ENCODE measurements at regions of chr5 and their contacts with region 1.

Region 1: GRCh38 chr5:56200856-56201666 is 32.1 kb downstream of the ANKRD55 start:
- DNase-seq: peak in 1 of 2 donors; percentile 62
- ATAC-seq: peak; percentile 94 to 100 (median 98)
- H3K4me3 ChIP-seq: no peak overlapping the region
- H3K27ac ChIP-seq: no peak overlapping the region
- H3K4me1 ChIP-seq: peaks cover 0 to 12% (median 6%) of the 10 kb centered on the region in 9 donors
- H3K27me3 ChIP-seq: no peaks in the 10 kb centered on the region
- CTCF ChIP-seq: peak; percentile 67 to 92 (median 82)

Region 2: DNA sequence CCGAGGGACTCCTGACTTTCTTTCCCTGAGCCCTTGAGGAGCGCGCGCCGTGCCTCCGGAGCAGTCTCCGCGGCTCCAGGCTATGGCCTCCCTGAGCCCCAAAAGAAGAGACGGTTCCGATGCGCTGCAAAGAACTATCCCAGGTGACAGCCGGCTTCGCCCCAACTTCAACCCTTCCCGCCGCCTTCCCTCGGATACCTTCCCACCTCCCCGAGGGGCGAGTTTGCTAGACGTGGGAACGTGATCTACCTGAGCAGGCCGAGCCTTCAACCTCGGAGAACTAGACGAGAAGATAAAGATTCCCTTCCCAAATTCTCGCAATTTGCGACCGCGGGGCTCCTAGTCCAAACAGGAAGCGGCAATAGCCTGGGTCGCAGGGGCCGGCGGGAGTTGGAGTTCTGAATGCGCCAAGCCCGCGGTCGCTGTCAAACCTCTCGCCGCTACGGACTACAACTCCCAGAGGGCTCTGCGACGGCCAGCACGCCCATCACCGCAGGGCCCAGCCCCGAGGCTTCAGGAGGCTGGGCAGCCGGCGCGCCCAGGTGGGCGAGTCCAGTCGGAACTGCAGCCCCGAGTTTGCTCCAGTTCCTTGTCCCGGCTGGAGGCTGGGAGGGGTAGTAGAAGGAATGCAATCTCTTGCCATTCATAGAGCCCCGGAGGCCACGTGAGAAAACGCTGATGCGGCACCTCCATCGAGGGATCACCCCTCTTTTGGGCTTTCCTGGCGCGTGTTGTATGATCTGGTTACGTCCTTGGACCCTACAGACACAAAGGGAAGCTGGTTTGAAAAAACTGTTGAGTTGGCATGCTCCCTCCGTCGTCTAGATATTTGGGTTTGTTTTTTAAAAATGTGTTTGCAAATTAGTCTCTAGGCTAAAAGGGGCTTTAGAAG is 488.8 kb before region 1 on chr5 and contains the start of gene SLC38A9:
- intact Hi-C with region 1: loop called in 6 of 10 experiments (anchors 5 to 10 kb)
- DNase-seq: peak; percentile 95 to 96
- ATAC-seq: peak; percentile 100
- H3K4me3 ChIP-seq: peak within 1 kb of the TSS; percentile 54 to 98 (median 82)
- H3K27ac ChIP-seq: peak within 1 kb of the TSS in 8 of 10 donors; percentile 46 to 88 (median 66)
- H3K4me1 ChIP-seq: peaks cover 0 to 15% (median 13%) of the 10 kb centered on the region in 9 donors
- H3K27me3 ChIP-seq: no peaks in the 10 kb centered on the region
- CTCF ChIP-seq: no peak
- total RNA-seq, gene SLC38A9: 5.2 to 9.1 (median 6.8) TPM

Region 3: DNA sequence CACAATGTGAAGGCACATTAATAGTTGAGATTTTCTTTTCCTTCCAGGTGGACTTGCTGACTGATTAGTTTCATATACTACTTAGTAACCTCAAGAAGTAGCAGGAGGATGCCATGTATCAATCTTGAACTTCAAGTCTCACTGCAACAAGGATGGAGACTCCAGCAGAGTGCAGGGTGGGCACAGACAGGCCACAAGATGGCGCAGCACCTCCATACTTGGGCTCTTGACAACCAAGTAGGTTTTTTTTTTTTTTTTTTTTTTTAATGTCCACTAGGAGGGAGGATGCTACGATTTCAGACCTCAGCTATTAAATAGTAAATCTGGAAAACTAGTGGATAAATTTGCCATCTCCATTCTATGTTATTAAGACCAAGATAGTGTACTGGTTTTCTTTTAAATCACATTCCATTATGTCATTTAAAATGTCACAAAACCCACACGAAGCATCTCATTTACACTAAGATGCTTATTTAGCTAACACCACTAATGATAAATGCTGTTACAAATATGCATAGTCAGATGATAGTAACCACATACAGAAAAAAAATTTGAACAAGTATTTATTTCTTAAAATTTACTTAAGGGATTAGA is 264.9 kb before region 1 on chr5:
- intact Hi-C with region 1: loop called (anchors 1 to 10 kb)
- DNase-seq: peak; percentile 81 to 83
- ATAC-seq: peak; percentile 59 to 90 (median 84)
- H3K4me3 ChIP-seq: no peak overlapping the region
- H3K27ac ChIP-seq: no peak overlapping the region
- H3K4me1 ChIP-seq: no peaks in the 10 kb centered on the region
- H3K27me3 ChIP-seq: no peaks in the 10 kb centered on the region
- CTCF ChIP-seq: peak; percentile 73 to 97 (median 89)

Region 4: GRCh38 chr5:55969956-55970355 is 231.1 kb before region 1 on chr5:
- intact Hi-C with region 1: loop called in 1 of 10 experiments (anchors 10 kb)
- DNase-seq: no peak
- ATAC-seq: no peak
- H3K4me3 ChIP-seq: no peak overlapping the region
- H3K27ac ChIP-seq: no peak overlapping the region
- H3K4me1 ChIP-seq: peaks cover 0 to 46% (median 20%) of the 10 kb centered on the region in 9 donors
- H3K27me3 ChIP-seq: no peaks in the 10 kb centered on the region
- CTCF ChIP-seq: no peak

Region 5: DNA sequence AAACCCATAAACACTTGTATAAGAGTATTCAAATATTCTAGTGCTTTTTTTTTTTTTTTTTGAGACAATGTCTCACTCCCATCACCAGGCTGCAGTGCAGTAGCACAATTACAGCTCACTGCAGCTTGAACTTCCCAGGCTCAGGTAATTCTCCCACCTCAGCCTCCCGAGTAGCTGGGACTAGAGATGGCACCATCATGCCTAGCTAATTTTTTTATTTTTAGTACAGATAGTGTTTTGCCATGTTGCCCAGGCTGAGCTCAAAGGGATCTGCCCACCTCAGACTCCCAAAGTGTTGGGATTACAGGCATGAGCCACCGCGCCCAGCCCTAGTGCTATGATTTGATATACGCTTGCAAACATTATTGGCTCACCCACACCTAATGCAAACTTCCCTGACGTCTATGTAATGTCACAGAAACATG is 218.1 kb before region 1 on chr5:
- intact Hi-C with region 1: loop called in 5 of 10 experiments (anchors 2 to 10 kb)
- DNase-seq: no peak
- ATAC-seq: peak in 6 of 8 donors; percentile 38 to 80 (median 67)
- H3K4me3 ChIP-seq: no peak overlapping the region
- H3K27ac ChIP-seq: no peak overlapping the region
- H3K4me1 ChIP-seq: peaks cover 0 to 82% (median 53%) of the 10 kb centered on the region in 9 donors
- H3K27me3 ChIP-seq: no peaks in the 10 kb centered on the region
- CTCF ChIP-seq: peak in 6 of 9 donors; percentile 3 to 56 (median 40)

Region 6: DNA sequence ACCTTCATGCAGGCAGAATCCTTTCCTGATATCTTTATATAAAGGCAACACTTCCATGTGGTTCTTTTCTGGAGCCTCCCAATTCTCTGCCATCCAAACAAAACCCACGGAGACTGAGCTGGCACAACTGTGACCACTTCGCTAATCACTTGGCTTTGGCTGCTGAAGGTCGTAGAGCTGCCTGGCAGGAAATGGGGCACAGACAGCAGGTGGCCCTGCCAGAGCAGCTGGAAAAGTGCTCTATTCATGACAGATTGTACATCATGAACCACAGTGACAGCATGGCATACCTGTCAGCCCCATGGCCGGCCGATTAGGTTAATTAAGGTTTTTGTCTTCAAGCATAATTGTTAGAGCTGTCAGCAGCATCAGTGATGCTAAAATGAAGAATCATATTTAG is 173.9 kb after region 1 on chr5:
- intact Hi-C with region 1: no loop called
- DNase-seq: peak; percentile 26 to 34
- ATAC-seq: peak; percentile 65 to 96 (median 92)
- H3K4me3 ChIP-seq: no peak overlapping the region
- H3K27ac ChIP-seq: peak overlapping the region in 1 of 10 donors; percentile 26
- H3K4me1 ChIP-seq: no peaks in the 10 kb centered on the region
- H3K27me3 ChIP-seq: no peaks in the 10 kb centered on the region
- CTCF ChIP-seq: no peak

Region 7: GRCh38 chr5:57025961-57026360 is 824.9 kb after region 1 on chr5:
- intact Hi-C with region 1: no loop called
- DNase-seq: no peak
- ATAC-seq: no peak
- H3K4me3 ChIP-seq: no peak overlapping the region
- H3K27ac ChIP-seq: no peak overlapping the region
- H3K4me1 ChIP-seq: peaks cover 0 to 9% (median 0%) of the 10 kb centered on the region in 9 donors
- H3K27me3 ChIP-seq: peaks cover 0 to 16% (median 0%) of the 10 kb centered on the region in 7 donors
- CTCF ChIP-seq: no peak